ENCODE measurements at regions of chr1 and their contacts with region 1.

Region 1: GRCh38 chr1:224513787-224514209 is 79.2 kb upstream of the WDR26 start:
- DNase-seq: peak in 1 of 2 experiments; percentile 98
- H3K4me3 ChIP-seq: no peak overlapping the region
- H3K27ac ChIP-seq: no peak overlapping the region
- H3K4me1 ChIP-seq: peaks cover 0 to 2% (median 0%) of the 10 kb centered on the region in 4 experiments; a peak in 2 of 7 replicates
- H3K27me3 ChIP-seq: no peaks in the 10 kb centered on the region
- CTCF ChIP-seq: peak; percentile 84 to 99 (median 96)
- EP300 ChIP-seq: no peak
- POLR2A ChIP-seq: no peak
- RAD21 ChIP-seq: peak; percentile 97 to 98

Region 2: DNA sequence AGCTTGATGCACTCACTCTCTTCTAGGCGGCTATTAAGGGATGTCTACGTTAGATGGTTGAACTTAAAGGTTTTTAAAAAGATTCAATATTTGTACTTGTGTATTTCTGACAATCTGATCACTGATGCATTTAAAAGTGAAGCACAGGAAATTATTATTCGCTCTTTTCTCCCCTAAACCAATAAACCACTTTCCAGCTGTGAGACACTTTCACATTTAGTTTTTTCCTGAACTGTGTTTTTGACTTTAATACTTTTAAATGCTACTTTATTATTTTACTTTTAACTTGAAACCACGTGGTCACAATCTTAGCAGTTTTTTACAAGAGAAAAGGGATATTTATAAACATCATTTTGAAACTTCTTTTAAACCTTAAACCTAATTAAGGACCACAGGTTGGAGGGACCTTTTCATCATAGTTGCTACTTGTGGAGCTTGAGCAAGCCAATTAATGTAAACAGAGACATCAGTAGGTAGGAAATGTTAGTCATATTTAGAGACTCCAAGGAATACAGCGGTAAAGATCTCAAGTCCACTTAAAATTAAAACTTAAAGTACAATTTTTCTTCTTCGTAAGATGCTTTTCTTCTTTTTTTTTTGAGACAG is 88.4 kb before region 1 on chr1:
- CTCF ChIA-PET with region 1: no interaction called
- POLR2A ChIA-PET with region 1: no interaction called
- DNase-seq: no peak
- H3K4me3 ChIP-seq: no peak overlapping the region
- H3K27ac ChIP-seq: no peak overlapping the region
- H3K4me1 ChIP-seq: no peaks in the 10 kb centered on the region
- H3K27me3 ChIP-seq: no peaks in the 10 kb centered on the region
- CTCF ChIP-seq: no peak
- EP300 ChIP-seq: no peak
- POLR2A ChIP-seq: no peak
- RAD21 ChIP-seq: no peak

Region 3: GRCh38 chr1:224503161-224504118 is 10.4 kb before region 1 on chr1:
- CTCF ChIA-PET with region 1: interaction called, 13 read pairs
- POLR2A ChIA-PET with region 1: interaction called, 7 read pairs
- DNase-seq: peak in 1 of 2 experiments; percentile 82
- H3K4me3 ChIP-seq: peak overlapping the region in 2 of 4 experiments; percentile 1 to 6; a peak in 3 of 8 replicates
- H3K27ac ChIP-seq: peak overlapping the region; percentile 32; the same call in 1 of the 2 replicates
- H3K4me1 ChIP-seq: peaks cover 24 to 38% (median 28%) of the 10 kb centered on the region in 4 experiments
- H3K27me3 ChIP-seq: no peaks in the 10 kb centered on the region
- CTCF ChIP-seq: peak; percentile 14 to 42 (median 38)
- EP300 ChIP-seq: no peak
- POLR2A ChIP-seq: no peak
- RAD21 ChIP-seq: peak; percentile 36 to 49; a peak in 3 of 4 replicates

Region 4: DNA sequence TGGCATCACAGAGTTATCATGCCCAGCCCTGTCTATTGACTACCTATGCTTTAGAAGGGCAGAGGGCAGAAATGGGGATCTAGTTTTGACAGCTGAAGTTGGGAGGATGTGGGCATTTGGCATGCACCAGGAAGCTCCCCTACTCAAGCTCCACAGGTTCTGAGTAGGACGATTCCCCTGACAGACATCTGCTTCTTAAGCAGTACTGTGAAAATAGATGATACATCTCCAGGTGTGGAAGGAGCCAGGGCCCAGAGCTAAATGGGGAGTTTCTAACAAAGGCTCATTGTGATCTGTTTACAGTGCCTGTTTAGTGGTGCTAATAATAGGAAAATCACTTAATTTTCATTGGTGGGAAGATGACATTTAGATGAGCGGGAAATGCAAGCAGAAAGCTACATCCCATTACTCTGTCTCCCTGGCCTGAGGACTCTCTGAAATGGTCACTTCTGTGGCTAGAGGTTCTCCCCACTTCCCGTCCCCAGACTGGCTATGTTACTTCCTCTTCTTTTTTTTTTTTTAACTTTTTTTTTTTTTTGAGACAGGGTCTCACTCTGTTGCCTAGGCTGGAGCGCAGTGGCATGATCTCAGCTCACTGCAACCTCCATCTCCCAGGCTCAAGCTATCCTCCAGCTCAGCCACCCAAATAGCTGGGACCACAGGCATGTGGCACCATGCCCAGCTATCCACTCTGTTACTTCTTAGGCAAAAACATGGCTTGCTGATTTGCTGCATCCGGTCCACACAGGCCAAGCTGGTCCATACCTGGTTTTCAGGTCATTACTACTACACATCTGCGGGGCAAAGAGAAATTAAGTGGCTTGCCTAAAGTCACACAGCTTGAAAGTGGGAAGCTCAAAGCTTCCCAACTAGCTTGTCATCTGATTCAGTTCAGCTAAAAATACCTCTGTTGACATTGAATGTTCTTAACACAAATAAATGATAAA is 79.1 kb after region 1 on chr1:
- CTCF ChIA-PET with region 1: interaction called, 11 read pairs
- POLR2A ChIA-PET with region 1: no interaction called
- DNase-seq: no peak
- H3K4me3 ChIP-seq: no peak overlapping the region
- H3K27ac ChIP-seq: no peak overlapping the region
- H3K4me1 ChIP-seq: peaks cover 0 to 18% (median 11%) of the 10 kb centered on the region in 4 experiments; a peak in 4 of 7 replicates
- H3K27me3 ChIP-seq: no peaks in the 10 kb centered on the region
- CTCF ChIP-seq: no peak
- EP300 ChIP-seq: no peak
- POLR2A ChIP-seq: no peak
- RAD21 ChIP-seq: no peak

Region 5: DNA sequence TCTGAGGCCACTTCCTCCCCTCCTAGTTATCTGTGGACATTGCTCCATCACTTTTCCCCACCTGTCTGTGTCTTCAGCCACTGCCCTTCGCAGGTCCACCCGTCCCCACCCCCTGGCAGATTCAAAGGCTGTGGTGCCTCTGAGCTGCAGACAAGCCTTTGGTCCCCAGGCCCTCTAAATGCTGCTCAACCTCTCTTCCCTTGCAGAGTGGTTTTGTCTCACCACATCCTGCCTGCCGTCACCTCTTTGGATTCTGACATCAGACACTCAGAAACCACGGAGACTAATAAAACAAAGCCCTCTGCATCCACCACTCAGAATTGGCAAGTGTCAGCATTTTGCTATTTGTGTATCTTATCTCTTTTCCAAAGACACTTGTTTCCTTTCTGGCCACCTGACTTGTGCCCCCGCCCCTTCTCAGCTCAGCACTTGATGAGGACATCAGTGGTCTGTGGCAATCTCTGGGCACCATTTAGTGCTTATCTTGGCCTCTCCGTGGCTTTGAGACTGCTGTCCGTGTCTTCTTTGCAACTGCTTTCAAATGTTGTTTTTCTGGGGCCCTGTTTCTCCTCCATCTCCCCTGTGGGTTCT is 110.0 kb after region 1 on chr1:
- CTCF ChIA-PET with region 1: interaction called, 23 read pairs
- POLR2A ChIA-PET with region 1: no interaction called
- DNase-seq: no peak
- H3K4me3 ChIP-seq: no peak overlapping the region
- H3K27ac ChIP-seq: no peak overlapping the region
- H3K4me1 ChIP-seq: no peaks in the 10 kb centered on the region
- H3K27me3 ChIP-seq: peaks cover 4 to 16% (median 9%) of the 10 kb centered on the region in 4 experiments
- CTCF ChIP-seq: no peak
- EP300 ChIP-seq: no peak
- POLR2A ChIP-seq: no peak
- RAD21 ChIP-seq: no peak

Region 6: DNA sequence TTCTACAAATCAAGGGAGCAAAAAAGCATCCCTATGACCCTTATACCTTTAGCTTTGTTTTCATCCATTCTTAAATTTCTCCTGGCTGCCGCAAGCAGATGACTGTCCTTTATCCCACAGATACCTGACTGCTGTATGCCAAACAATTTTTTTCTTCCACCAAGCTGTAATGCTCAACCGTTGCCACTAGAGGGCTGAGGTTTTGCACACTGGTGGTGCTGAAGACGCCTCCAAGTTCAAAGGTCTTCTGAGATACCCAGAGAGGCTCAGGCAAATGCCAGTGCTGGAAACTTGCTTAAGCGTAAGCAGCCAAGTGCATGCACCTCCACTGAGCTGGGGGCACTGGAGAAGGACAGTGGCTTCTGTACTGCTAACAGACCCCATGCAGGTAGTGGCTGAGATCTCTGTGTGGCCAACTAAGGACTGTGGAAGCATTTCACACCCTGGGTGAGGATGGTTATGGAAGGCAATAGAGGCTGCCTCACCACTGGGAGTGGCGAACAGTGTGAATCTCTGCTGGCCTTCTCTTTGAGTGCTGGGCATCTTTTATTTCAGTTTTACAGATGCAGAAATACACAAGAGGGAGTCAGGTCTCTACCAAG is 130.9 kb after region 1 on chr1:
- CTCF ChIA-PET with region 1: interaction called, 144 read pairs
- POLR2A ChIA-PET with region 1: no interaction called
- DNase-seq: peak; percentile 41 to 79
- H3K4me3 ChIP-seq: no peak overlapping the region
- H3K27ac ChIP-seq: no peak overlapping the region
- H3K4me1 ChIP-seq: no peaks in the 10 kb centered on the region
- H3K27me3 ChIP-seq: no peaks in the 10 kb centered on the region
- CTCF ChIP-seq: peak; percentile 61 to 88 (median 87)
- EP300 ChIP-seq: no peak
- POLR2A ChIP-seq: no peak
- RAD21 ChIP-seq: peak; percentile 82 to 86